ENCODE measurements at regions of chr1 and their contacts with region 1.

Region 1: DNA sequence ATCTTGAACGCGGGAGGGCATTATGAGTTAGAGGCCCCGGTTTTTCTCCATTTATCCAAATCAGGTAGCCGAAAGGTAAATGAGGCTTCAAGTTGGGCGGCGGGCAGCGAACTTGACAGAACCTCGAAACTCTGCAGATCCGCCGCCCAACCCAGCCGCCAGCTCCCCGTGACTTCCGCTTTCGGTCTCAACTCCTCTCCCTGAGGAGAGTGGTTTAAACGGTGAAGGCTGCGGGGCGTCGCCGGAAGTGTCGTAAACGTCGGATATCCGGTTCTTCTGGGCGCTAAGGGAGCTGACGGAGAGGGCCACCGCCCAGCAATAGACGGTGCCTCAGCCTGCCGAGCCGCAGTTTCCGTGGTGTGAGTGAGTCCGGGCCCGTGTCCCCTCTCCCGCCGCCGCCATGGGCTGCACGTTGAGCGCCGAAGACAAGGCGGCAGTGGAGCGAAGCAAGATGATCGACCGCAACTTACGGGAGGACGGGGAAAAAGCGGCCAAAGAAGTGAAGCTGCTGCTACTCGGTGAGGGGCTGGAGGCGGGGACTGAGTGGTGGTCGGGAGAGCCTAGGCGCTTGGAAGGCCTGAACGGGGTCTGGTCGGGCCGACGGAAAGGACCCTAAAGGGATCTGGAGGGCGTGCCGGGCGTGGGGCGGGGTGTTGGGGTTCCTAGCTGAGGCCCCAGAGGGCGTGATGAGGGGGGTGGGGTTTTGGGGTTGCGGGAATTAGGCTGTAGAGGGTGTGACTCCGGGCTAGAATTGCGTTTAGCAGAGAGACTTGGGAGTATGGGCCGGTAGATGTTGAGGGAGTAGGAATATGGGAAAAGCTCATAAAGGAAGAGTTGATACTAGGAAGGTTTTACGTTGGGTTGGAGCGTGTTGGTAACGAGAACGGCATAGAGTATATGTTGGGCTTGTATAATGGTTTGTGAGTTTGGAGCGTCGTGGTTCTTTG is at the start of gene GNAI3:
- DNase-seq: peak; percentile 99
- total RNA-seq, gene GNAI3: 3.9 TPM

Region 2: DNA sequence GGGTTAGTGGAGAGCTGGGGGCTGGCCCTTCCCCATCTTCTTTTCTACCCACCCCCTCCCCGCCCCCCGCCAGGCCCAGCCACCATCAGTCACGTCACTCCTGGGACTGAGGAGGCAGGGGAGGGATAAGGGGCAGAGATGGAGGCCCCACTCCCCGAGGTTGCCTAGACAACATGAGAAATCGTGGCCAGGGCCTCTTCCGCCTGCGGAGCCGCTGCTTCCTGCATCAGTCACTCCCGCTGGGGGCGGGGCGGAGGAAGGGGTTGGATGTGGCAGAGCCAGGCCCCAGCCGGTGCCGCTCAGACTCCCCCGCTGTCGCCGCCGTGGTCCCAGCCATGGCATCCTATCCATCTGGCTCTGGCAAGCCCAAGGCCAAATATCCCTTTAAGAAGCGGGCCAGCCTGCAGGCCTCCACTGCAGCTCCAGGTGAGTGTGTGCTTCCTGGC is 72.3 kb after region 1 on chr1:
- intact Hi-C with region 1: loop called (anchors 2 kb)
- DNase-seq: peak; percentile 96

Region 3: GRCh38 chr1:109628540-109629321 is 80.1 kb after region 1 on chr1:
- intact Hi-C with region 1: loop called (anchors 2 kb)
- DNase-seq: no peak

Measured in cardiac septum (tissue), 1 donor.